Endothelial cell of umbilical vein (primary cell): ENCODE measurements at regions of chr11 and their contacts with region 1.

Region 1: DNA sequence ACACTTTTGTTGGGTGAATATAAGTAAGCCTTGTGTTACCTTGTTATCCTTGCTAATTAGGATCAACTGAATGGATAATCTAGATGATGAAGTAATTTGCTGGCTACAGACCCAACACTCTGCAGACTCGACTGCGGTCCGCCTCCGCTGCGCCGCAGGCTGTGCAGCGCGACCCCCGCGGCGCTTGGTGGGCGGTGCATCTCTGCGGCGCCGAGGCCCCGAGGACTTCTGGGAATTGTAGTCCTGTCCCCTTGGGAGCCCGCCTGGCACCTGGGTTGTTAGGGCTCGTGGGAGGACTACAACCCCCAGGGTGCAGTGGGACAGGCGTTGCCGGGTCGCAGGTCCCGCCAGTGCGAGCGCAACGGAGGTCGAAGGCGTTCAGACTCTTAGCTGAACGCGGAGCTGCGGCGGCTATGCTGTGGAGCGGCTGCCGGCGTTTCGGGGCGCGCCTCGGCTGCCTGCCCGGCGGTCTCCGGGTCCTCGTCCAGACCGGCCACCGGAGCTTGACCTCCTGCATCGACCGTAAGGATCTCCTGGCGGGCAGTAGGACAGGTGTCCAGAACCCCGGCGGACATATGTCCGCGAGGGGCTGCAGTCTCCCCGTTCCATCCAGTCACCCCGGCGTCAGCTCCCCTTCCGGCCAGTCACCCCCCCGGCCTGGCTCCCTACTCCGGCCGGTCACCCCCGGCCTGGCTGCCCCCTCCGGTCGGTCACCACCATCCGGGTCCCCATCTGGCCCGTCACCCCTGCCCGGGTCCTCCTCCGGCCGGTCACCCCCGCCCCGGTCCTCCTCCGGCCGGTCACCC is at the starts of genes ACAD8 and THYN1:
- DNase-seq: peak; percentile 98
- H3K4me3 ChIP-seq: peak within 1 kb of the TSS; percentile 61 to 88 (median 72)
- H3K27ac ChIP-seq: no peak within 1 kb of the TSS
- H3K4me1 ChIP-seq: peaks cover 11% of the 10 kb centered on the region
- H3K27me3 ChIP-seq: no peaks in the 10 kb centered on the region
- CTCF ChIP-seq: peak in 1 of 2 donors; percentile 24
- POLR2A ChIP-seq: peak; percentile 87
- total RNA-seq, gene ACAD8: 21.2 and 22.9 TPM in 2 replicates
- total RNA-seq, gene THYN1: 38.0 and 40.7 TPM in 2 replicates

Region 2: DNA sequence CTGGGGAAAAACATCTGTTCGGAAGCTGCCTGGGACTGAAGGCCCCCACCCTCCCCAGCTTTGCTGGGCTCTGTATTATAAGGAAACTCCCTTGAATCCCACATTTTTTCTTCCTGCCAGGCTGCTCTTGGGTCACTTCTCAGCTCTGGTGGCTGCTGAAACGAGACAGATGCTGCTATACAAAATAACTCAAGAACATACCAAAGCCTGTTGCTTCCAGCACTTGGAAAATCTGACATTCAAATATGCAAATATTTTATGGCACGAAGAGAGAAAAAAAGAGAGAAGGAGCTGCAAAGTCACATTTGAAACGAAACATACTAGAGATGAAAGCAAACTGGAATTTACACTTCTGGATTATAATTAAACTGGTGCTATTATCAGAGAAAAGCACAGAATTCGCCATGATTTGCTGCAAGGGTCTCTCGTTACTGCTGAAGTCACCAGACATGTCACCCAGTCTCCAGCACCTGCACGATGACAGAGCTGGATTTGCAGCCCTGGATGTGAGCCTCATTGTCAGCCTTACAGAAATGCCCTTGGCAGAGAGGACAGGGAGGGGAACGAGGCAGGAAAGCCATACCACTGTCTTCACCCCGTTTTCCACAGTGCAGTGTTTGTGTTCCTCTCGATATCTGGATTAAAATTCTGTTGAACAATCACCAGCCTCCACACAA is 248.8 kb before region 1 on chr11:
- CTCF ChIA-PET with region 1: no interaction called
- POLR2A ChIA-PET with region 1: no interaction called
- dilution Hi-C with region 1: no loop called
- intact Hi-C with region 1: no loop called
- DNase-seq: no peak
- H3K4me3 ChIP-seq: no peak overlapping the region
- H3K27ac ChIP-seq: no peak overlapping the region
- H3K4me1 ChIP-seq: no peaks in the 10 kb centered on the region
- H3K27me3 ChIP-seq: no peaks in the 10 kb centered on the region
- CTCF ChIP-seq: no peak
- POLR2A ChIP-seq: no peak

Region 3: GRCh38 chr11:134033696-134034491 is 219.5 kb before region 1 on chr11:
- CTCF ChIA-PET with region 1: no interaction called
- POLR2A ChIA-PET with region 1: no interaction called
- dilution Hi-C with region 1: no loop called
- intact Hi-C with region 1: loop called (anchors 5 kb)
- DNase-seq: peak; percentile 75
- H3K4me3 ChIP-seq: no peak overlapping the region
- H3K27ac ChIP-seq: no peak overlapping the region
- H3K4me1 ChIP-seq: peaks cover 11% of the 10 kb centered on the region
- H3K27me3 ChIP-seq: peaks cover 0 to 3% of the 10 kb centered on the region in 2 experiments
- CTCF ChIP-seq: no peak
- POLR2A ChIP-seq: no peak

Region 4: DNA sequence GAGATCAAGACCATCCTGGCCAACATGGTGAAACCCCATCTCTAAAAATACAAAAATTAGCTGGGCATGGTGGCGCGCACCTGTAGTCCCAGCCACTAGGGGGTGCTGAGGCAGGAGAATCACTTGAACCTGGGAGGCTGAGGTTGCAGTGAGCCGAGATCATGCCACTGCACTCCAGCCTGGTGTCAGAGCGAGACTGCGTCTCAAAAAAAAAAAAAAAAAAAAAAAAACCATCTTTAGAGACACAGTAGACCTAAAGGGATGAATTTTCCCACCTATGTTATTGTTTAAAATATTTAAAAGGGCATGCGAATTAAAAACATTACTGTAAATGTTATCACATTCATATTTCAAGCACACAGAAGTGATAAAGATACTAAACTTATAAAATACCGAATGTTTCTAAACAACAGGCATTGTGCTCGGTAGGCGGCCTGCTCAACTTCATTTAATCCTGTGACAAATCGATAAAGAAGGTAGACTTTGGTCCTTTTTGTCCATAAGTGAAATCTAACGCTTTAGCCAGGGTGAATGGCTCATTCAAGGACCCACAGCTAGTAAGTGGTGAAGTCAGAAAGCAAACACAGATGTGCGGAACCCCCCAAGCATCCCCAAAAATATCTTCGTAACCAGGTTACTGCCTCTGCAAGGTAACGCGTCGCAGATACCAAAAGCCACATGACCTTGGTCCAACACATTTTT is 45.7 kb before region 1 on chr11:
- CTCF ChIA-PET with region 1: interaction called, 11 read pairs
- POLR2A ChIA-PET with region 1: no interaction called
- dilution Hi-C with region 1: no loop called
- intact Hi-C with region 1: loop called (anchors 2 kb)
- DNase-seq: peak; percentile 10
- H3K4me3 ChIP-seq: no peak overlapping the region
- H3K27ac ChIP-seq: no peak overlapping the region
- H3K4me1 ChIP-seq: no peaks in the 10 kb centered on the region
- H3K27me3 ChIP-seq: no peaks in the 10 kb centered on the region
- CTCF ChIP-seq: peak; percentile 39 to 54
- POLR2A ChIP-seq: no peak

Region 5: GRCh38 chr11:134223836-134224709 is 29.3 kb before region 1 on chr11 and contains the starts of genes NCAPD3 and VPS26B:
- CTCF ChIA-PET with region 1: interaction called, 6 read pairs
- POLR2A ChIA-PET with region 1: no interaction called
- dilution Hi-C with region 1: no loop called
- intact Hi-C with region 1: loop called (anchors 1 kb)
- DNase-seq: peak; percentile 97
- H3K4me3 ChIP-seq: peak within 1 kb of the TSS; percentile 43 to 73 (median 59)
- H3K27ac ChIP-seq: peak within 1 kb of the TSS; percentile 30
- H3K4me1 ChIP-seq: peaks cover 25% of the 10 kb centered on the region
- H3K27me3 ChIP-seq: no peaks in the 10 kb centered on the region
- CTCF ChIP-seq: no peak
- POLR2A ChIP-seq: peak; percentile 95
- total RNA-seq, gene NCAPD3: 42.6 and 43.8 TPM in 2 replicates
- total RNA-seq, gene VPS26B: 41.6 and 53.1 TPM in 2 replicates

Region 6: DNA sequence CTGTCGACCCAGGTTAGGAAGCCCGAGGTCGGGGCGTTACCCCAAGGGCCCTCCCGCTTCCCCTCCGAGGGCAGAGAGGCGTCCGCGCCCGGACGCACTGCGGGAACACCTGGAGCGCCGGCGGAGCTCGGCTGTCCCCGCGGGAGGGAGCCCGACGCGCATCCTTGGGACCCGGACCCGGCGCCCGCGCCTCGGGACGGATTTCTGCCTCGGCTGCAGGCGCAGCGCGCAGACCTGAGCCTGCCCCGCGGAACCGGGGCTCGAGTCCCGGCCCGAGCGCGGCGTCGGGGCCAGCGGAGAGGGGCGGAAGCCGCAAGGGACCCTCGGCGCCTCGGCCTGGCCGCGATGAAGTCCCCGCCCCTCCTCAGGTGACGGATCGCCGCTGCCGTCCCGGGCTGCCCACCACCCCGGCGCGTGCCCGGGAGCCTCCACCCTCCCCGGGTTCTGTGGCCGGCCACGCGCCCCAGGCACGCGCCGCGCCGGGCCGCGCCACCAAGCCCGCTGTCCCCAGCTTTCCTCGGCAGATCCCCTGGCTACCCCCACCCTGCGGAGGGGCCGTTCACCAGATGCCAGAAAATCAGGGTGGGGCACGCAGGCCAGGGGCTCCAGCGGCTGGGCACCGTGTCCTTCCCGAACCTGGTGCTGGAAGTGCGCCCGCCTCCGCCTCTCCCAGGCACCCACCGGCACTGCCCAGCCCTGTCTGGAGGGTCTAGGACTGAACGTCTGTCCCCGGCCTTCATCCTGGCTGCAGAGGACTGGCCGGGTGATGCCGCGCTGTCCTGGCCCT is 23.2 kb after region 1 on chr11:
- CTCF ChIA-PET with region 1: interaction called, 4 read pairs
- POLR2A ChIA-PET with region 1: no interaction called
- dilution Hi-C with region 1: no loop called
- intact Hi-C with region 1: loop called (anchors 1 kb)
- DNase-seq: no peak
- H3K4me3 ChIP-seq: no peak overlapping the region
- H3K27ac ChIP-seq: no peak overlapping the region
- H3K4me1 ChIP-seq: peaks cover 2% of the 10 kb centered on the region
- H3K27me3 ChIP-seq: peaks cover 54 to 73% of the 10 kb centered on the region in 2 experiments
- CTCF ChIP-seq: no peak
- POLR2A ChIP-seq: no peak

Region 7: DNA sequence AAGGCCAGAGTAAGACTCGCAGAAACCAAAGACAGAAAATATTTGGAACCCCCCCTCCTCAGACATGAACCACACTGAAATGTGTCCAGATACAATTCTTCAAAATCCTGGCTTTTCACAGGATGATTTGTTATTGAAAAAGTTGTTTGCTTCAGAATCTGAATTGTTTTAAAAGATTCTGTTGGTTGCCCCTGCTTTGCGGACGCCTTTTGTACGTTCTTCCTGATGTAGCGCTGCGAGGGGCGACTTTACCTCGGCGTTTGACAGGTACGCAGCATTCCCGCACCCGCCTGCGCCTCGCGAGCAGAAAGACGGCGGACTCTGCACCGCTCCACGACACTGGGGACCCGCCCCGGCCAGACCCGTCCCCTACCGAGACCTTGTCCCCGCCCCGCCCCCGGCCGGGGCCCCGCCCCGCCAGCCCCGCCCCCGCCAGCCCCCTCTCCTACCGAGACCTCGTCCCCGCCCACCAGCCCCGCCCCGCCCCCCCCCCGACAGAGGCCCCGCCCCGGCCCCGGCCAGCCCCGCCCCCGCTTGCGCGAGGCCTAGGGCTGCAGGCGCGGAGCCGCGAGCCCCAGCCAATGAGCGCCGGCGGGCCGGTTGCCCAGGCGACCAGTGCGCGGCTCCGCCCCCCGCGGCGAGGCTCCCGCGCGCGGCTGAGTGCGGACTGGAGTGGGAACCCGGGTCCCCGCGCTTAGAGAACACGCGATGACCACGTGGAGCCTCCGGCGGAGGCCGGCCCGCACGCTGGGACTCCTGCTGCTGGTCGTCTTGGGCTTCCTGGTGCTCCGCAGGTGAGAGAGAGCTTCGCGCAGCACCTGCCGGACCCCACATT is 78.2 kb after region 1 on chr11 and contains the start of gene GLB1L2:
- CTCF ChIA-PET with region 1: no interaction called
- POLR2A ChIA-PET with region 1: no interaction called
- dilution Hi-C with region 1: no loop called
- intact Hi-C with region 1: loop called (anchors 5 kb)
- DNase-seq: peak; percentile 36
- H3K4me3 ChIP-seq: peak within 1 kb of the TSS in 2 of 3 experiments; percentile 3 to 37
- H3K27ac ChIP-seq: no peak within 1 kb of the TSS
- H3K4me1 ChIP-seq: peaks cover 4% of the 10 kb centered on the region
- H3K27me3 ChIP-seq: peaks cover 16 to 17% of the 10 kb centered on the region in 2 experiments
- CTCF ChIP-seq: no peak
- POLR2A ChIP-seq: no peak
- total RNA-seq, gene GLB1L2: 0.28 and 0.55 TPM in 2 replicates